Activated T-helper 1 cell treated with anti-CD3 and anti-CD28 coated beads, Interleukin-12 subunit alpha, Interleukin-12 subunit beta, Interleukin-2, Interleukin-4 antibody, amounts not matched to agents 30 ng/mL and 10 ng/mL and 1 ng/mL, durations not matched to agents 14 hours and 24 hours and 36 hours (primary cell): ENCODE measurements at regions of chr11 and their contacts with region 1.

Region 1: GRCh38 chr11:73982969-73983740 is 512 bp upstream of the UCP2 start:
- DNase-seq: peak; percentile 94
- H3K4me3 Mint-ChIP-seq: peak overlapping the region; percentile 100
- H3K27ac Mint-ChIP-seq: peak overlapping the region; percentile 99
- H3K4me1 Mint-ChIP-seq: peaks cover 55% of the 10 kb centered on the region
- H3K27me3 Mint-ChIP-seq: no peaks in the 10 kb centered on the region

Region 2: GRCh38 chr11:73760679-73761402 is 222.3 kb before region 1 on chr11 and contains the start of gene RAB6A:
- intact Hi-C with region 1: loop called (anchors 1 kb)
- DNase-seq: peak; percentile 100
- H3K4me3 Mint-ChIP-seq: peak within 1 kb of the TSS; percentile 98
- H3K27ac Mint-ChIP-seq: peak within 1 kb of the TSS; percentile 97
- H3K4me1 Mint-ChIP-seq: peaks cover 41% of the 10 kb centered on the region
- H3K27me3 Mint-ChIP-seq: peaks cover 3% of the 10 kb centered on the region
- total RNA-seq, gene RAB6A: 81.9 and 88.0 TPM in 2 replicates

Region 3: GRCh38 chr11:73939096-73939495 is 44.1 kb before region 1 on chr11:
- intact Hi-C with region 1: no loop called
- DNase-seq: no peak
- H3K4me3 Mint-ChIP-seq: no peak overlapping the region
- H3K27ac Mint-ChIP-seq: no peak overlapping the region
- H3K4me1 Mint-ChIP-seq: no peaks in the 10 kb centered on the region
- H3K27me3 Mint-ChIP-seq: no peaks in the 10 kb centered on the region

Region 4: DNA sequence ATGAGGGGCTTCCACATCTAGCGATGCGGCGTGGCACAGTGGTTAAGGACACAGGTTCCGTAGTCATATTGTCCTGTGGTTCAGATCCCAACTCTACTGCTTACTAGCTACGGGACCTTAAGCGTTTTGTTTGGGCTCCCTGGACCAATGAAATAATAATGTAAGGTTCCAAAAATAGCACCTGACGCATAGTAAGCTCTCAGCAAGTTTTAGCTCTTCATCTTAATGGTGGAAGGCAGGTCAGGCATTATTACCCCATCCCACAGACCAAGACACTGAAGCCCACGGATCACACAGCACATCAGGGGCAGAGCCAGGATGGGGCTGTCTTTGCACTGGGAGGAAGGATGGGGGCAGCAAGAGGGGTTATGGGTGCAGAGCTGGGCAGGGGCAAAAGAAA is 19.3 kb before region 1 on chr11:
- intact Hi-C with region 1: loop called (anchors 1 kb)
- DNase-seq: no peak
- H3K4me3 Mint-ChIP-seq: no peak overlapping the region
- H3K27ac Mint-ChIP-seq: peak overlapping the region; percentile 78
- H3K4me1 Mint-ChIP-seq: peaks cover 28% of the 10 kb centered on the region
- H3K27me3 Mint-ChIP-seq: peaks cover 2% of the 10 kb centered on the region

Region 5: DNA sequence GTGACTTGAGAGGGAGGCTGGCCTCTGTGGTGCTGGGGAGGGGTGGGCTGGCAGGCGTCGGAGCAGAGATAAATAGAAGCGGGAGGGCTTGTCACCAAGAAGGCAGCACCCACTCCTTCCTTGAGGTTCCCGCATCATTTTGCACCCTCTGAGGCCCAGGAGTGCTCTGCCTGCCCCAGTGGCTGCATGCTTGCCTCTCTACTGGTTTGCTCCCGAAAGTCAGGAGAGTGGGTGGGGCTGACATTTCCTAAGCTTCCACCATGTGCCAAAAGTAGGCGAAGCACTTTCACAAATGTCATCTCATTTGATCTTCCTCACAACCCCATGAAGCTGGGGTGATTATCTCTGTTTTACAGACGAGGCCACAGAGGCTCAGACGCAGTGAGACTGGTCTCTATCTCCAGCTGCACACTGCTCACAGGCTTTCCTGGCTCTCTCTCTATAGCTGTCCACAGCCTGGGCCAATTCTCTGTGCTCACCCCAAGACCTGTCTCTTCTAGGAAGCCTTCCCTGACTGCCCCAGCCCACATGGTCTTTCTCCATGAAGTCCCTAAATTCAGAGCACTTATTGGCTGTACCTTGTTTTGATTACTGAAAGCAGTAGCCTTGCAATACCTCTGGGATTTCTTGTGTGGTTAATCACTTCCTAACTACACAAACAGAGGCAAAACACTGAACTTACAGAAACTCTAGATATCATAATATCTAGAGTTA is 28.4 kb after region 1 on chr11:
- intact Hi-C with region 1: loop called (anchors 1 kb)
- DNase-seq: peak; percentile 57
- H3K4me3 Mint-ChIP-seq: peak overlapping the region; percentile 55
- H3K27ac Mint-ChIP-seq: peak overlapping the region; percentile 99
- H3K4me1 Mint-ChIP-seq: peaks cover 91% of the 10 kb centered on the region
- H3K27me3 Mint-ChIP-seq: no peaks in the 10 kb centered on the region

Region 6: DNA sequence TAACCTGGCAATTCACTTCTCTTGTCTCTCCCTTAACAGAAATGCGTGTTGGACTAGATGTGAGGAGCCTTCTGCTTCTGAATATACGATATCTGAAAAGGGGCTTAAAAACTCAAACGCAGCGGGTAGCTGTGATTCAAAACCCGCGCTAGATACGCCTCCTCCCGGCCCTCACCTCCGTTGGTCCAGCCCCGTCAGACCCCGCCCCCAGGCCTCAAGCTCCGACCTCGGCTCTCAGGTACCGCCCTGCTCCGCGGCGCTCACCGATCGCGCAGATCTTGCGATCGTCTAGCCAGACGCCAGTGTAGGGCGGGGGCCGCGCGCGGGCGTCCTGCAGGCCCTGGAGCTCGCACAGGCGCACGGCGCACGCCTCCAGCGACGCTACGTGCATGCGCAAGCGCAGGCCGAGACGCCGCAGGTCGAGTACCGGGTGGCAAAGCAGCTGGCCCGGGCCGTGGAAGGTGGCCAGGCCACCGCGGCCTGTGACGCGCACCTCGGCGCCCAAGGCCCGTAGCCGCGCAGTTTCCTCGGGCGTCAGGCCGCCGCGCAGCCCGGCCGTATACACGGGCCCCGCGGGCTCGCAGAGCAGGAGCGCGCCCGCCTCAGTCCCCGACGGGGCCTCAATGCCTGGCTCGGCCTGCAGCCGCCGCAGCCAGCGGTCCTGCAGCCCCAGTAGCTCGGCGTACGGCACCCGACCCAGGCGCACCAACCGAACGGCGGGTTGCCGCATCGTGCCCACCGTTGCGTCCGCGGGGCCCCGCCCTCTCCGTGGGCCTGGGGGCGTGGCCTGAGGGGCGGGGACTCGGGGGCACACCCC is 510.0 kb after region 1 on chr11 and contains the start of gene LIPT2:
- intact Hi-C with region 1: loop called (anchors 5 kb)
- DNase-seq: peak; percentile 96
- H3K4me3 Mint-ChIP-seq: peak within 1 kb of the TSS; percentile 86
- H3K27ac Mint-ChIP-seq: peak within 1 kb of the TSS; percentile 83
- H3K4me1 Mint-ChIP-seq: peaks cover 21% of the 10 kb centered on the region
- H3K27me3 Mint-ChIP-seq: peaks cover 8% of the 10 kb centered on the region
- total RNA-seq, gene LIPT2: 2.7 and 3.4 TPM in 2 replicates